ENCODE measurements at regions of chr20 and their contacts with region 1.

Region 1: DNA sequence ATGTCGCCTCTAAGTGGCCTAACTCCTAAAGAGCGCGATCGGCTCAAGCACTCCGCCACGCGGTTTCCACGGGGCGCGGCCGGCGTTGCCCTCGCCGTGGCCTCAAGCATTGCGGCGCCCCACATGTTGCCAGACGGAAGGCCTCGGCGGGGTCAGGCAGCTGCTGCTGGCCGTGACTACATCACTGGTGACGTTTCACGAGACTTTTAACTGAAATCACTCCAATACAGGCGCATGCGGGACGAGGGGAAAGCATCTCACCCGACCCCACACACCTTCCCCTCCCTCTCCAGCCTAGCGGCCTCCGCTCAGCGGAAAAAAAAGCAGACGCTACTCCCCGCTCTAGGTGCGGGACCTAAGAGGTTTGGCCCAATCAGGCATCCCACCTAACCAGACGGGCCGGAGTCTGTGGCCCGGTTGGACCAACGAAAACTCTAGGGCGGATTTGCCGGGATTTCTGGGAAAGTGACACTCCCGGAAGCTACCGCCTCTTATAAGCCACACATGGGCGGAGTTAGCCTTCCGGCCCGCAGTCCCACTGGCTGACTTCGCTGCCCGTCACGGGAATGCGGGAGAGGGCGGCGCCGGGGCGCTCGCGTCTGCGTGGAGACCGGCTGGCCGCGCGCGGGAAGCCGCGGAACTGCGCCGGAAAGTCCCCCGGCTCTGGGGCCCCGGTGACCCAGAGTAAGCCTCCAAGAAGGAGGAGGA is at the start of gene NXT1:
- DNase-seq: peak; percentile 96 to 99
- H3K4me3 ChIP-seq: peak within 1 kb of the TSS; percentile 69 to 97
- H3K27ac ChIP-seq: peak within 1 kb of the TSS; percentile 99 to 100
- H3K4me1 ChIP-seq: peaks cover 0 to 24% (median 20%) of the 10 kb centered on the region in 4 donors
- H3K27me3 ChIP-seq: no peaks in the 10 kb centered on the region
- CTCF ChIP-seq: no peak

Region 2: DNA sequence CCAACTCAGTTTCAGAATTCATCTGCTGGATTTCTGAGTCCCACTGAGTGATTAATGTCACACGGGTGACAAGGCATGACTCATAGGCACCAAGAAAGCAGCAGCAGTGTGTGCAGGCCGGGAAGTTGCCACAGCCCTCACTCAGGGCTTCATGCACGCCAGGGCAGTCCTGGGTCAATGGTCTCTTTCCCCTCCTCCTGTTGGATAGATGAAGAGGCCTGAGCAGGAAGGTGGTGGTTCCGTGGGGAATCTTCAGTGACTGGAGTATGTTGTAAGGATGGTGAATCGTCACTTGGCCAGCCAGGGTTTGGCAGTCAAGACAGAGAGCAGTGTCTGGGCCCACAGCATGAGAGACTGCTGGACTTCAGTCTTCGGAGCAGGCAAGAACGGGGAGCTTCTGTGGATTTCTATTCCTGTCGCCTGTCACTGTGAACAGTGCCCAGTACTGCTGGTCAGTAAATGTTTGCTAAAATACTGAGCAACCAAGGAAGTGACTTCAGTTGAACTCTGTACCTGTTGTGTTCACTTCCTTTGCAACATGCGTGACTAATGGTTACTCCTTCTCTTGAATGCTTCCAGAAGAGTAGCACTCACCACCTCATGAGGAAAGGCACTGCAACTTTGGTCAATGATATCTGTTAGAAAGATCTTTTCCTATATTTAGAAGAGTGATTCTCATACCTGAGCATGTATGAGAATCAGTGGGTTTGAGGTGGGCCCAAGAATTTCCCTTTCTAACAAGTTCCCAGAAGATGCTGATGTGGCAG is 202.2 kb before region 1 on chr20:
- intact Hi-C with region 1: loop called (anchors 10 kb)
- DNase-seq: peak; percentile 87 to 91
- H3K4me3 ChIP-seq: no peak overlapping the region
- H3K27ac ChIP-seq: peak overlapping the region; percentile 90 to 91
- H3K4me1 ChIP-seq: peaks cover 0 to 98% (median 67%) of the 10 kb centered on the region in 4 donors
- H3K27me3 ChIP-seq: no peaks in the 10 kb centered on the region
- CTCF ChIP-seq: no peak

Region 3: DNA sequence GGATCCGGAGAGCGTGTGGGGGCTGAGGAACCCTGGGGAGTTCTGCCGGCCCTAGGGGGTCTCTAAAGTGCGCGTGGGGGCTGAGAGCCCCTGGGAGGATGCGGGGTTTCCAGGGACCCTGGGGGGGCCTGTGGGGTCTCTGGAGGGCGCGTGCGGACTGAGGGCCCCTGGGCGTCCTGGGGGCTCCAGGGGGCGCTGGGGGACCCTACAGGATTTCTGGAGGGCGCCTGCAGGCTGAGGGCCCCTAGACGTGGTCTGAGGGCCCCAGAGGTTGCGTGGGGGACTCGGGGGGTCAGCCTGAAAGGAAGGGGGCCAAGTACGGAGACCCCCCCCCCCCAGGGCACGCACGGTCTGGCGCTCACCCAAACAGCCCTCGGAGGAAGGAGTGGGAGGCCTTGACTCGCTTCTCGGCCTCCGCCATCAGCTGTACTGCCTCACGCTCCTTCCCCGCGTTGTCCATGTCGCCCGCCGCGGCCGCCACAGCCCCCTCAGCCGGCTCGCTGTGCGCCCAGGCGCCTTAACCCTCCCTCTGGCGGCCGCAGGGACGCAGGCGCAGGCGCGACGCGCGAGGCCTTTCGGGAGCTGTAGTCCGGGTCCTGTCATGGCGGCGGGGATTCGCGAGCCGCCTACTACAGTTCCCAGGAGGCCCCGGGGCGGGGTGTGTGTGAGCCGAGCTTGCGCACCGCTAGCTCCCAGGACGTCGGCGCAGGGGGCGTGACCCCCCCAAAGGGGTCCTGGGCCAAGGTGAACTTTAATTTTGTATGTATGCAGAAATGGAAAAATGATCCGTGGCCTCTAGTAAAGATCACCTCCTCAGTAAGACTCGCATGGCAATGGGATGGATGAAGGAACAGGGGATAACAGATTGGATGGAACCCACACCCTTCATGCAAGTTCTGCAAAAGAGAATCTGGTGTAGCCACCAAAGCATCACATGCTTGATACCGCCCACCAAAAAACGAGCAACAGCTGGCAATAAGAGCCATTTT is 70.9 kb after region 1 on chr20 and contains the start of gene NAPB:
- intact Hi-C with region 1: loop called (anchors 5 kb)
- DNase-seq: peak; percentile 94 to 95
- H3K4me3 ChIP-seq: peak within 1 kb of the TSS; percentile 100
- H3K27ac ChIP-seq: peak within 1 kb of the TSS; percentile 94 to 98
- H3K4me1 ChIP-seq: peaks cover 0 to 15% (median 9%) of the 10 kb centered on the region in 4 donors
- H3K27me3 ChIP-seq: no peaks in the 10 kb centered on the region
- CTCF ChIP-seq: peak; percentile 75 to 85

Region 4: GRCh38 chr20:23606652-23607049 is 256.3 kb after region 1 on chr20:
- intact Hi-C with region 1: loop called (anchors 10 kb)
- DNase-seq: peak; percentile 85 to 88
- H3K4me3 ChIP-seq: no peak overlapping the region
- H3K27ac ChIP-seq: no peak overlapping the region
- H3K4me1 ChIP-seq: peaks cover 0 to 7% (median 0%) of the 10 kb centered on the region in 4 donors
- H3K27me3 ChIP-seq: peaks cover 0 to 8% of the 10 kb centered on the region in 2 donors
- CTCF ChIP-seq: peak; percentile 89 to 91

Region 5: GRCh38 chr20:23629017-23629541 is 278.7 kb after region 1 on chr20:
- intact Hi-C with region 1: loop called (anchors 5 kb)
- DNase-seq: peak in 1 of 2 donors; percentile 57
- H3K4me3 ChIP-seq: no peak overlapping the region
- H3K27ac ChIP-seq: no peak overlapping the region
- H3K4me1 ChIP-seq: peaks cover 0 to 7% (median under 1%) of the 10 kb centered on the region in 4 donors
- H3K27me3 ChIP-seq: no peaks in the 10 kb centered on the region
- CTCF ChIP-seq: no peak